Mammary epithelial cell (primary cell): ENCODE measurements at regions of chr3 and their contacts with region 1.

Region 1: GRCh38 chr3:51257870-51258269 is 127.2 kb upstream of the MANF start:
- DNase-seq: no peak
- H3K4me3 ChIP-seq: no peak overlapping the region
- H3K27ac ChIP-seq: no peak overlapping the region
- H3K4me1 ChIP-seq: no peaks in the 10 kb centered on the region
- H3K27me3 ChIP-seq: no peaks in the 10 kb centered on the region
- CTCF ChIP-seq: no peak

Region 2: DNA sequence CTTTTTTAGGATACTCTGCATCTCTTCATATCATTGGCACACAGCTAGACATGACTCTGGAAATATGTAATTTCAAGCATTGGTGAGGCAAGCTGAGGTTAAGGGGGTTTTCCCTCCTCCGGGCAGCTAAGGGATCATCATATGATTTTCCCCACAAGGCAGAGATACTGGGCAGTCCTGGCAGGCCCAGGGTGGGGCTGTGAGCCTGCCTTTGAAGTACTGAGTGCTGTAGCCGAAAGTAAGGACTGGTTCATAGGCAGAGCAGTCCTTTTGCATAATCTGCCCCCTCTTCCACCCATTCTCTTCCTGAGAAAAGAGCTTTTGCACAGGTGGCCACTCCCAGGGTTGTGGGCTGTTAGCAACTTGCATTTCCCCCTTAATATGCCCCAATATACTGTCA is 41.6 kb before region 1 on chr3:
- CTCF ChIA-PET with region 1: no interaction called
- dilution Hi-C with region 1: loop called (anchors 5 kb)
- in situ Hi-C with region 1: no loop called
- intact Hi-C with region 1: no loop called
- DNase-seq: no peak
- H3K4me3 ChIP-seq: no peak overlapping the region
- H3K27ac ChIP-seq: no peak overlapping the region
- H3K4me1 ChIP-seq: no peaks in the 10 kb centered on the region
- H3K27me3 ChIP-seq: no peaks in the 10 kb centered on the region
- CTCF ChIP-seq: no peak

Region 3: DNA sequence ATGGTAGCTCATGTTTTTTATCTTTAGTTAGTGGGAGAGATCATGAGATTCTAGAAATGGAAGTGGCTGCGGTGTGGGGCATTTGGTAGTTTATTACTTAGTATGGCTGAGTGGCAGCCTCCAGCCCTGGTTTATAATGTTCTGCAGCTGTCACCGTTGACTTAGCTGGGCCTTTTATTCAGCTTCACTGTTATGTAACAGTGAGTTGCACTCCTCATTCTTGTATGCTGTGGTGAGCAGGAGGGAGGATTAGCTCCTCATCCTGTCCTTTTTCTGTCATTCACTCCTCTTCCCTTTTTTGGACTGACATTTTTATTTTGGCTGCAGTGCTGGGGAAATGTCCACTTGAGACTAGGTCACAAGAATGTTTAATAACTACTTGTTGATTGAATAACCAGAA is 310.2 kb after region 1 on chr3:
- CTCF ChIA-PET with region 1: no interaction called
- dilution Hi-C with region 1: no loop called
- in situ Hi-C with region 1: no loop called
- intact Hi-C with region 1: no loop called
- DNase-seq: no peak
- H3K4me3 ChIP-seq: no peak overlapping the region
- H3K27ac ChIP-seq: no peak overlapping the region
- H3K4me1 ChIP-seq: no peaks in the 10 kb centered on the region
- H3K27me3 ChIP-seq: no peaks in the 10 kb centered on the region
- CTCF ChIP-seq: no peak